Spleen (tissue), 13 donors: ENCODE measurements at regions of chr4 and their contacts with region 1.

Region 1: DNA sequence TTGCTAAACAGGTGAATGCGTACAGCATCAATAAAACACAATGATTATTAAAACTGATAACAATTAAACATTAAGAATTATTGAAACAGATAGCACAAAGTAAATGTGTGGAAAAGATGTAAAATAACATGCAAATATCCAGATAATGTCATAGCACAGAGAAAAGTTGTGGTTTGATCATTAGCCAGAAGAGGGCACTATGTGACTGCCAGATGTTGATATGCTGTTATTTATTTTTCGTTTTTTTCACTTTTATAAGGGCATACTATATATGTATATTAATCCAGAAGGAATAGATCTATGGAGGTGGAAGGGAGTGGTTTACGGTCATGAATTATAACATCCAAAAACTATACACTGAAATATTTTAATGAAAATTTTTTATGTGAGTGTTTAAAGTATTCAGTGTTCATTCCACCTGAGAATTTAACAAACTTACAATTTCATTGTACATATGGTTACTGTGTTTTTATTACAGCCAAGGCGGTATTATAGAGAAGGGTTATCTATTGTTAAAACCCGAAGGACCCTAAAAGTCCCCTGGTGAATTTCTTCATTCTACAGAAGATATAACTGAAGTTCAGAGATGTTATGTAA is 211.9 kb upstream of the UGT8 start:
- DNase-seq: no peak
- H3K4me3 ChIP-seq: no peak overlapping the region
- H3K27ac ChIP-seq: no peak overlapping the region
- H3K4me1 ChIP-seq: no peaks in the 10 kb centered on the region
- H3K27me3 ChIP-seq: peaks cover 0 to 5% (median 0%) of the 10 kb centered on the region in 7 donors
- CTCF ChIP-seq: peak; percentile 13 to 63 (median 49)
- POLR2A ChIP-seq: no peak

Region 2: DNA sequence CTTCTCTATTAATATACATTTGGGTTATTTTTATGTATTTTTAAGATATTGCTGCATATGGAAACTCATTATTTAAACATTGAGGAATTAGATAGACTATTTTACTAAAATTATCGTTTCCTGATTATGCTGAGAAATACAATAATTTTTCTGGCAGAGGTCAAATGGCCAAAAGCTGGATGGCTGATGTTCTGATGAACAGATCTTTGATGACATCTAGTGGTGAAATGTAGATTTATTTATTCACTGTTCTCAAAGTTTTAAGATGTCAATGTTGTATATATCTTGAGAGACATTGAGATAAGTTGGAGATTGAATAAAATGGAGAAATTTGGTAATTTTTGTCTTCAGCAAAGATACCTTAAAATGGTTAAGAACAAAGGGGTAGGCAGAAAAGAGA is 308.0 kb after region 1 on chr4:
- intact Hi-C with region 1: loop called (anchors 5 kb)
- DNase-seq: no peak
- H3K4me3 ChIP-seq: no peak overlapping the region
- H3K27ac ChIP-seq: no peak overlapping the region
- H3K4me1 ChIP-seq: peaks cover 0 to 7% (median 0%) of the 10 kb centered on the region in 6 donors
- H3K27me3 ChIP-seq: no peaks in the 10 kb centered on the region
- CTCF ChIP-seq: peak in 9 of 11 experiments; percentile 14 to 54 (median 38)
- POLR2A ChIP-seq: no peak